WTC11 (cell line): ENCODE measurements at regions of chr12 and their contacts with region 1.

Region 1: DNA sequence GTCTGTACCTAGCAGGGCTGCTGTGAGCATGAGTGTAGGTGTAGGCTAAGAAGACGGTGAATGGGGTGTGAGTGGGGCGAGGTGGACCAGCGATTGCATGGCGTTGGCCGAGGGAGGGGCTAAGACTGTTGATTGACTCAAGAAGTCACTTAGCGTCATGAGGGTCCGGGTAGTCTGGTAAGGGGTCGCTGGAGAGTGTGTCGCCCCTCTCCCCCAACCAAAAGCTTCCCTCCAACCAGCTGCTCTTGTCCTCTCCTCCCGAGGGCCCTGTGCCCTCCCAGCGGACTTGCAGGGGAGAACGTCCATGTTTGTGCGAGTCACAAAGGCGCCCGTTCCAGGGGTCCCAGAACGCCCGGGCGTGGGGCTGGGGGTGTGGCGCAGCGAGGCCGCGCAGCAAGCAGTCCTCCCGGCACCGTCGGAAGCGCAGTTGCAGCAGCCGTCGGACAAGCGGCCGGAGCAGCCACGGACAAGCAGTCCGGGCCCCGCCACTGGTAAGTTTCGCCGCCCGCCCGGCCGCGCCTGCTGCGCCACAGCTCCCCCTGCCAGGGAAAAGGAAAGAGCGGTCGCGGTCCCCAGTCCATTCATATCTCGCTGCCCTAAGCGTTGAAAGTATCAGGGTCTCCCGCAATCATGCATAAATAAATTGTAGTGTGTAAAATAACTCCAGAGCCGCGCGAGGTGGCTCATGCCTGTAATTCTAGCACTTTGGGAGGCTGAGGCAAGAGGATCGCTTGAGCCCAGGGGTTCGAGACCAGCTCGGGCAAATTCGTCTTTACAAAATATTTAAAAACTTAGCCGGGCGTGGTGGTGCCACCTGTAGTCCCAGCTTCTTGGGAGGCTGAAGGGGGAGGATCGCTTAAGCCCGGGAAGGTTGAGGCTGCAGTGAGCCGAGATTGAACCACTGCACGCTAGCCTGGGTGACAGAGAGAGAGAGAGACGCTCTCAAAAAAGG is at the start of gene CCDC63:
- DNase-seq: peak; percentile 77
- ATAC-seq: peak; percentile 92
- H3K4me3 Mint-ChIP-seq: peak within 1 kb of the TSS; percentile 84
- H3K27ac Mint-ChIP-seq: peak within 1 kb of the TSS; percentile 81; the same call in 1 of the 2 replicates
- H3K4me1 Mint-ChIP-seq: peaks cover 18% of the 10 kb centered on the region
- H3K27me3 Mint-ChIP-seq: peaks cover 19% of the 10 kb centered on the region
- CTCF ChIP-seq: no peak
- total RNA-seq, gene CCDC63: 0.44 to 1.3 TPM (median 0.98 TPM) in 3 replicates

Region 2: GRCh38 chr12:110794623-110795280 is 52.1 kb before region 1 on chr12:
- CTCF ChIA-PET with region 1: no interaction called
- POLR2A ChIA-PET with region 1: no interaction called
- DNase-seq: no peak
- ATAC-seq: no peak
- H3K4me3 Mint-ChIP-seq: no peak overlapping the region
- H3K27ac Mint-ChIP-seq: no peak overlapping the region
- H3K4me1 Mint-ChIP-seq: peaks cover 7% of the 10 kb centered on the region
- H3K27me3 Mint-ChIP-seq: peaks cover 3% of the 10 kb centered on the region
- CTCF ChIP-seq: no peak

Region 3: GRCh38 chr12:110826592-110827200 is 20.2 kb before region 1 on chr12:
- CTCF ChIA-PET with region 1: interaction called, 11 read pairs
- POLR2A ChIA-PET with region 1: no interaction called
- DNase-seq: peak; percentile 95
- ATAC-seq: peak; percentile 98
- H3K4me3 Mint-ChIP-seq: peak overlapping the region; percentile 8; the same call in 1 of the 2 replicates
- H3K27ac Mint-ChIP-seq: no peak overlapping the region
- H3K4me1 Mint-ChIP-seq: 0 out of 2 replicates have a peak, but pooled peaks cover 4% of the 10 kb centered on the region
- H3K27me3 Mint-ChIP-seq: peaks cover 19% of the 10 kb centered on the region
- CTCF ChIP-seq: peak; percentile 90

Region 4: DNA sequence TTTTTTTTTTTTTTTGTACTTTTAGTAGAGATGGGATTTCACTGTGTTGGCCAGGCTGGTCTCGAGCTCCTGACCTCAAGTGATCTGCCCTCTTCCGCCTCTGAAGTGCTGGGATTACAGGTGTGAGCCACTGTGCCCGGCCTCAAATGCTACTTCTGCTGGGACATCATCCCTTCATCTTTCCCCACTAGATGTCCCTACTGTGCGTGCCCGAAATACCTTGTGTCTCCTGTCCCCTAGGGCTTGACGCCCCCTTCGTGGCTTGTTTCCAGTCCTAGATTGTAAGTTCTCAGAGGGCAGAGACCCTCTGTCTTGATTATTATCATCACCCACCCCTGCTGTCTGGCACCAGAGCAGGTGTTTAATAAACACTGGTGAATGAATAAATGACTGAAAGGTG is 14.8 kb after region 1 on chr12:
- CTCF ChIA-PET with region 1: interaction called, 15 read pairs
- POLR2A ChIA-PET with region 1: no interaction called
- DNase-seq: peak; percentile 31
- ATAC-seq: peak; percentile 70
- H3K4me3 Mint-ChIP-seq: no peak overlapping the region
- H3K27ac Mint-ChIP-seq: no peak overlapping the region
- H3K4me1 Mint-ChIP-seq: peaks cover 38% of the 10 kb centered on the region
- H3K27me3 Mint-ChIP-seq: peaks cover 5% of the 10 kb centered on the region; the same call in 1 of the 2 replicates
- CTCF ChIP-seq: no peak

Region 5: GRCh38 chr12:110888256-110888991 is 41.5 kb after region 1 on chr12:
- CTCF ChIA-PET with region 1: interaction called, 13 read pairs
- POLR2A ChIA-PET with region 1: no interaction called
- DNase-seq: no peak
- ATAC-seq: no peak
- H3K4me3 Mint-ChIP-seq: no peak overlapping the region
- H3K27ac Mint-ChIP-seq: no peak overlapping the region
- H3K4me1 Mint-ChIP-seq: peaks cover 2% of the 10 kb centered on the region
- H3K27me3 Mint-ChIP-seq: peaks cover 3% of the 10 kb centered on the region
- CTCF ChIP-seq: no peak